ENCODE measurements at regions of chr2 and their contacts with region 1.

Region 1: GRCh38 chr2:42360890-42361727 is at the start of gene COX7A2L:
- DNase-seq: peak; percentile 98 to 99 (median 98)
- ATAC-seq: peak; percentile 99
- H3K4me3 ChIP-seq: peak within 1 kb of the TSS; percentile 80 to 90
- H3K27ac ChIP-seq: peak within 1 kb of the TSS; percentile 94
- H3K4me1 ChIP-seq: peaks cover 19 to 42% of the 10 kb centered on the region in 2 donors
- H3K27me3 ChIP-seq: no peaks in the 10 kb centered on the region
- CTCF ChIP-seq: no peak
- polyA plus RNA-seq, gene COX7A2L: 164 to 193 (median 180) TPM

Region 2: DNA sequence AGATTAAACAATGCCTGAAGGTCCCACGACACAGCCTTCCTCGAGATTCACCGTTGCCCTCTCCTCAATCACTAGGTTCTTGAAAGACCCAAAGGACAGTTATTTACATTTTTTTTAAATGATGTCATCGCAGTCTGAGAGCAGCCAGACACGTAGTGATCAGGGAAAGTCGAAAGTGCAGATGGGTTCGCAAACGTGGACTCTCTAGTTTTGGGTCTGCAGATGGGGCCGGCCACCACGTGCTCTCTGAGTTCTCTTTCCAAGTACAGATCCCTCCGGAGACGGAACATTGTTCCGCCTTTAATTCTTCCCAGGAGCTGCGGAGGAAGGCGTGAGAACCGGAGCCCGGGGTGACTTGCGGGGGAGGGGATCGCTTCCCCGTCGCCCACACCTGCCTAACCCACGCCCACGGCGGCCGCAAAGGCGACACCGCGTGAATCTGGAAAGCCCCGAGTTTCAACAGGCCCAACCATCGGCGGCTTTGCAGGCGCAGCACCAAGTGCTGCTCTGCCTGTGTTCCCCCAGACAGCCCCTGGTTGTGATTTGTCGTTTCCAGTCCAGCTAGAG is 259.0 kb before region 1 on chr2:
- intact Hi-C with region 1: loop called in 1 of 2 experiments (anchors 10 kb)
- DNase-seq: peak; percentile 66 to 94 (median 80)
- ATAC-seq: peak; percentile 55
- H3K4me3 ChIP-seq: peak overlapping the region; percentile 11 to 44
- H3K27ac ChIP-seq: peak overlapping the region; percentile 94 to 95
- H3K4me1 ChIP-seq: peaks cover 32 to 99% of the 10 kb centered on the region in 2 donors
- H3K27me3 ChIP-seq: no peaks in the 10 kb centered on the region
- CTCF ChIP-seq: no peak